AG04450 (cell line): ENCODE measurements at regions of chr4 and their contacts with region 1.

Region 1: DNA sequence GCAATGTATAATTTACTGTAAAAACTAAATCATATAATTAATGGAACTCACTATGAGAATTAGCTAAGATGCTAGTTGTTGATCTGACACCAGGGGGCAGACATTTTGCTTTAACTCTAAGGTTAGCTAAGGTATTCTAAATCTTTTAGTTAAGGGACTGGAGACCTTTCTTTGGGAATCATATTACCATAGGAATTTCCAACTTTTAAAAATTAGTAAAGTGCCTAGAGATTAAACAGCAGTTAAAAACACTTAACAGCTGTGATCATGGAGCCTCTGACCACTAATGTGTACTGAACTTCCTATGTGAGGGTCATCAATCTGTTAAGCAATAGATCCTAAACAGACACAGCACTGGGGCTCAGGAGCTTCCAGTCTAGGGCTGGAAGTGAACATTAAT is 226.6 kb downstream of the NSUN7 start:
- DNase-seq: peak; percentile 41
- H3K4me3 ChIP-seq: no peak overlapping the region
- H3K27ac ChIP-seq: no peak overlapping the region
- H3K27me3 ChIP-seq: no peaks in the 10 kb centered on the region
- CTCF ChIP-seq: peak; percentile 76

Region 2: DNA sequence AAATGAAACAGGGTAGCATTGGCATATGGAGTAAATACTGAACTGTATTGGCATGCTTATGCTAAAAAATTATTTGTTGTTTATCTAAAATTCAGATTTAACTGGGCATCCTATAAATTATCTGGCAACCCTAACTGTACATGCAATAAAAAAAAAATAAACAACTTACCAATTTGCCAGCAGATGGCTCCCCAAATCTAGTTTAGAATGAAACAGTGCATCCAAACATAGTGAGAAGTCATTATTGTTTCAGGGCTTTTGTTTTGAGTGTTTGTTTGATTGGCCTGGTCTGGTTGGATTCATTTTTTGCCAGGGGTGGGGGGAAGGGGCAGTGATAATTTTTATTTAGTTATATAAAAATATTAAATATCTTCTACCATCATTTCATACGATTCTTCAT is 239.4 kb before region 1 on chr4:
- CTCF ChIA-PET with region 1: no interaction called
- POLR2A ChIA-PET with region 1: no interaction called
- DNase-seq: no peak
- H3K4me3 ChIP-seq: no peak overlapping the region
- H3K27ac ChIP-seq: no peak overlapping the region
- H3K27me3 ChIP-seq: no peaks in the 10 kb centered on the region
- CTCF ChIP-seq: peak; percentile 43

Region 3: GRCh38 chr4:40992472-40993295 is 16.3 kb after region 1 on chr4:
- CTCF ChIA-PET with region 1: interaction called, 14 read pairs
- POLR2A ChIA-PET with region 1: interaction called, 4 read pairs
- DNase-seq: no peak
- H3K4me3 ChIP-seq: no peak overlapping the region
- H3K27ac ChIP-seq: peak overlapping the region; percentile 72
- H3K27me3 ChIP-seq: no peaks in the 10 kb centered on the region
- CTCF ChIP-seq: no peak

Region 4: DNA sequence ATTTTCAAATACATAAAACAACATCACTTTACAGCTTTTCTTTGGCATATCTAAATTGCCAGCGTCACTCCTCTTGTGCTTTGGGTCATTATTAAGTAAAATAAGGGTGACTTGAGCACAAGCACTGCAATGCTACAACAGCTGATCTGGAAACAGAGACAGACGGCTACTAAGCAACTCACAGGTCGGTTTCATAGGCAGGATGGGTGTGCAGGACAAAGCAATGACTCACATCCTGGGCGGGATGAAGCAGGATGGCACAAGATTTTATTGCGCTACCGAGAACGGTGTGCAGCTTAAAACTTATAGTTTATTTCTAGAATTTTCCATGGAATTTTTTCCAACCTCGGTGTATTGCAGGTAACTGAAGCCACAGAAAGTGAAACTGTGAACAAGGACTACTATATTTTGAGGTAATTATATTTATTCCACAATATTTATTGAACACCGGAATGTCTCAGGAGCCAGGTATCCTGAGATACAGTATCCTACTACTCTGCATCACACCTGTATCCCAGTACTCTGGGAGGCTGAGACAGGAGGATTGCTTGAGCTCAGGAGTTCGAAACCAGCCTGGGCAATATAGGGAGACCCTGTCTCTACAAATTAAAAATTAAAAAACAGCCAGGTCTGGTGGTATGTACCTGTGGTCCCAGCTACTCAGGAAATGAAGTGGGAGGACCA is 22.5 kb after region 1 on chr4:
- CTCF ChIA-PET with region 1: interaction called, 10 read pairs
- POLR2A ChIA-PET with region 1: interaction called, 4 read pairs
- DNase-seq: no peak
- H3K4me3 ChIP-seq: no peak overlapping the region
- H3K27ac ChIP-seq: no peak overlapping the region
- H3K27me3 ChIP-seq: no peaks in the 10 kb centered on the region
- CTCF ChIP-seq: no peak

Region 5: GRCh38 chr4:41294445-41295062 is 318.2 kb after region 1 on chr4:
- CTCF ChIA-PET with region 1: no interaction called
- POLR2A ChIA-PET with region 1: no interaction called
- DNase-seq: no peak
- H3K4me3 ChIP-seq: no peak overlapping the region
- H3K27ac ChIP-seq: no peak overlapping the region
- H3K27me3 ChIP-seq: peaks cover 2% of the 10 kb centered on the region
- CTCF ChIP-seq: no peak